CD8-positive, alpha-beta T cell (primary cell): ENCODE measurements at regions of chr18 and their contacts with region 1.

Region 1: GRCh38 chr18:50982802-50983179 is 15.0 kb downstream of the ELAC1 start:
- DNase-seq: no peak
- ATAC-seq: no peak
- H3K4me3 ChIP-seq: no peak overlapping the region
- H3K4me3 Mint-ChIP-seq: no peak overlapping the region
- H3K27ac ChIP-seq: no peak overlapping the region
- H3K27ac Mint-ChIP-seq: no peak overlapping the region
- H3K4me1 ChIP-seq: no peaks in the 10 kb centered on the region
- H3K4me1 Mint-ChIP-seq: peaks cover 19% of the 10 kb centered on the region
- H3K27me3 ChIP-seq: no peaks in the 10 kb centered on the region
- H3K27me3 Mint-ChIP-seq: no peaks in the 10 kb centered on the region
- CTCF ChIP-seq: no peak

Region 2: GRCh38 chr18:49061991-49062831 is 1920.6 kb before region 1 on chr18:
- CTCF ChIA-PET with region 1: no interaction called
- POLR2A ChIA-PET with region 1: no interaction called
- intact Hi-C with region 1: no loop called
- DNase-seq: no peak
- ATAC-seq: no peak
- H3K4me3 ChIP-seq: no peak overlapping the region
- H3K4me3 Mint-ChIP-seq: no peak overlapping the region
- H3K27ac ChIP-seq: no peak overlapping the region
- H3K27ac Mint-ChIP-seq: no peak overlapping the region
- H3K4me1 ChIP-seq: no peaks in the 10 kb centered on the region
- H3K4me1 Mint-ChIP-seq: peaks cover 3% of the 10 kb centered on the region
- H3K27me3 ChIP-seq: no peaks in the 10 kb centered on the region
- H3K27me3 Mint-ChIP-seq: no peaks in the 10 kb centered on the region
- CTCF ChIP-seq: no peak

Region 3: GRCh38 chr18:50422286-50422898 is 560.4 kb before region 1 on chr18:
- CTCF ChIA-PET with region 1: no interaction called
- POLR2A ChIA-PET with region 1: no interaction called
- intact Hi-C with region 1: no loop called
- DNase-seq: no peak
- ATAC-seq: no peak
- H3K4me3 ChIP-seq: no peak overlapping the region
- H3K4me3 Mint-ChIP-seq: no peak overlapping the region
- H3K27ac ChIP-seq: no peak overlapping the region
- H3K27ac Mint-ChIP-seq: no peak overlapping the region
- H3K4me1 ChIP-seq: no peaks in the 10 kb centered on the region
- H3K4me1 Mint-ChIP-seq: no peaks in the 10 kb centered on the region
- H3K27me3 ChIP-seq: peaks cover 0 to 4% of the 10 kb centered on the region in 2 experiments
- H3K27me3 Mint-ChIP-seq: peaks cover 16% of the 10 kb centered on the region
- CTCF ChIP-seq: no peak

Region 4: DNA sequence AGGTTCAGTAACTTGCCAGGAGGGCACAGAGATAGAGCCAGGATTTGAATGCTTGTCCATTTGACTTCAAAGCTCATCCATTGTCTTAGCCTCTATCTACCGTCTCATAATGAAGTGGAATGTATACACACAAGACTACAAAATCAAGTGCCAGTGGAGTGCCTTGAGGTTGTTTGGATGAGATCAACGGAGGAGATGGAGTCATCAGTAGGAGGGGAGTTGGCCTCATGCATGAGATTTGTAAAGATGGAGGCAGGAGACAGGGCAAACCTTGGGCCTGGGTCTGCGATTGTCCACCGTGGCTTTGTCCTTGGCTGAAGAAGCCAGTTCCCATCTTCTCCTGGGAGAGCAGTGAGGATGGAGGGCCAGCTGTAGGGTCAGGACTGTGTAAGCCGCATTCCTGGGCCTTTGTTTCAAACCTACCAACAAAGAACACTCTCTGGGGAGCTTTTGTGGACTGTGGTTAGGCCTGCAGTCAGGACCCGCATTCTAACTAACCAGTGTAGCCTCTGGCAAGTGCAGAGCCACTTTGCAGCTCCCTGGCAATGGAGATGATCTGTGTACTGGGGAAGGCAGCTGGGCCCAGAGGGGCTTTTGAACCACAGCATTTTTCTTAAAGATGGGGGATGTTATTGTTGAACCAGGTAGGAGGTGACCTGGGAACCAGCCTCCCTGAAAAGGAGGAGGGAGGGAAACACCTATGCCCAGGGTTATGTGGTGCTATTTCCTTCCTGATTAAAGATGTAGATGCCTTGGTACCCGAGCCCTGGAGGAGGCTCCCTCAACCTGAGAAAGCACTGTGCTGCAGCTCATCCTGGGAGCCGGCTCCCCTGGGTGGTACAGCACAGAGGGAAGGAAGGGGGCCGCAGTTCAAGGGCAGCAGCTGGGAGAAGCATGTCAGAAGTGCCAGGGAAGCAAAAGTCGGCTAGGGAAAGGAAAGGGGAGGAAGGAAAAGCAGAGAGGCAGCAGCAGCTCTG is 34.4 kb after region 1 on chr18:
- CTCF ChIA-PET with region 1: no interaction called
- POLR2A ChIA-PET with region 1: no interaction called
- intact Hi-C with region 1: loop called in 1 of 2 experiments (anchors 5 kb)
- DNase-seq: no peak
- ATAC-seq: no peak
- H3K4me3 ChIP-seq: no peak overlapping the region
- H3K4me3 Mint-ChIP-seq: no peak overlapping the region
- H3K27ac ChIP-seq: no peak overlapping the region
- H3K27ac Mint-ChIP-seq: no peak overlapping the region
- H3K4me1 ChIP-seq: no peaks in the 10 kb centered on the region
- H3K4me1 Mint-ChIP-seq: no peaks in the 10 kb centered on the region
- H3K27me3 ChIP-seq: no peaks in the 10 kb centered on the region
- H3K27me3 Mint-ChIP-seq: no peaks in the 10 kb centered on the region
- CTCF ChIP-seq: no peak